Posterior cingulate gyrus (tissue), 11 donors: ENCODE measurements at regions of chr17 and their contacts with region 1.

Region 1: DNA sequence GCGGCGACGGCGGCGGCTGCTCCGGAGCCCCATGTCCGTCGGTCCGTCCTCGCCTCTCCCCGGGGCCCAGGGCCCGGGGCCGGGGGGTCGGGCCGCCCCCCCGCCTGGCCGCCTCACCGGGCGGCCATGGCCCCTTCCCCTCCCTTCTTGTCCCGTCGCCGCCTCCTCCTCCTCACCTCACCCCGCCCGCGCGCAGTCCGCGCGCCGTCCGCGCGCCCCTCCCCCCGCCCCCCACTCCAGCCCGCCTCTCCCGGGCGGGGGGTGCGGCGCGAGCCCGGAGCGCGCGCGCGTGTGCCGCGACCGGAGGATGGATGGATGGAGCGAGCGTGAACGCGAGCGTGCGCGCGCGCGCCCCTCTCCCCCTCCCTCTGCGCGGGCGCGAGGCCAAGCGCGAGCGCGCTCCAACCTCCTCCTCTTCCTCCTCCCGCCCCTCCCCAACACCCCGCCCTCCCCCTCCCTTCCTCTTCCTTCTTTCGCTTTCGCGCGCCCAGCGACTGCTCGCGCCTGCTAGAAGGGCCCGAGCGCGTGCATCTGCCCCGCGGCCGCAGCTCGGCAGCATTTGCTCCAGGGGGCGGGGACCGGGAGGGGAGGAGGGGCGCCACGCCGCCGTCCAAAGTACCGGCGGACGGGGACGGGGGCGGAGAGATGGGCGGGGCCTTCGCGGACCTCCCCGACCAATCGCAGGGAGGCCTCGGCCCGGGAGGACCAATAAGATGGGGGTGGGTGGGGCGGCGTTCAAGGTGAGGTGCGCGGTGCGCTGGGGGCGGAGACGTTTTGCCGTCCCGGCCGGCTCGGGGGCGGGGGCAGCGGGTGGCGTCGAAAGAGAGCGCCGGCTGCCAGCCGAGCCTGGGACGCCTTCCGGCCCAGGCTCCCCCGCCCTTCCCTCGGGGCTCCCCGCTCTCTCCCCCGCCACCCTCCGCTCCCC is at the start of gene ATXN7L3:
- DNase-seq: peak; percentile 94 to 99 (median 96)

Region 2: GRCh38 chr17:43983515-43984411 is 216.1 kb before region 1 on chr17:
- intact Hi-C with region 1: no loop called
- DNase-seq: peak in 6 of 10 donors; percentile 12 to 86 (median 54)

Region 3: DNA sequence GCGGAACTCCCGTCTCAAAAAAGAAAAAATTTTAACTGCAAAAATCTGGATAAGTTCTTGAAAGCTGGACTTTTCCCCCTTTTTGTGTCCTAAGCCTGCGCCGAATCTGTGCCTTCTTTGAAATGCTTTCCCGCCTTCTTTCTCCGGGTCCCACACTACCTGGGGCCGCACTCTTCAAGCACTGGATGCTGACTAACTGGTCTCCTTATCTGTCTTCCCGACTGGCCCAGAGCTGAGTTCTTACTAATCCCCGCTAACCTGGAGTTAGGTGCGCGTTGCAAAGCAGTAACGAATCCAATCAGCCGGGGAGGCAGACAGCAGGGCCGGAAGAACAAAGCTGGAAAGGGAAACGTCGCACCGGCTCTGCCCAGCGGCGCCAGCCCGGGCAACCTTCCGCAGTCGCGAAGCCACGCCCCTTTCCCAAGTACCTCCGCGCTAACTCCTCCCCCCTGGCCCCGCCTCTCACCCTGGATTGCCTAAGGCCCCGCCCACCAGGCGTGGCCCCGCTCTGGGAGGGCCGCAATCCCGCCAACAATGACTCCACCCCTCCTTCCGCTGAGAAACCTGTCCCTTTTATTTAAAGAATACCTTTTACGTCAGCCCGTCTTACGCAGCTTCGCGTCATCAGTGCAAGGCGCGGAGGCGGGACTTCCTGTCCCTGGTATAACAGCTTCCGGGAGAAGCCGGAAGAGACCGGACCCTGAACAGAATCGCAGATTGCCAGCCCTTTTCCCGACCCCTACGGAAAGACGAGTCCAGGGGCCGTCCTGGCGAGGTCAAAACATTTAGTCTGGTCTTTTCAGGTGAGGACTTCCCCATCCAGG is 13.3 kb before region 1 on chr17 and contains the start of gene TMUB2:
- intact Hi-C with region 1: loop called (anchors 1 kb)
- DNase-seq: peak; percentile 97 to 100 (median 99)

Region 4: GRCh38 chr17:44218344-44219107 is 18.7 kb after region 1 on chr17:
- intact Hi-C with region 1: loop called (anchors 1 kb)
- DNase-seq: peak; percentile 75 to 98 (median 82)

Region 5: GRCh38 chr17:44279666-44280391 is 80.0 kb after region 1 on chr17:
- intact Hi-C with region 1: no loop called
- DNase-seq: peak in 6 of 10 donors; percentile 6 to 91 (median 29)